ENCODE measurements at regions of chr19 and their contacts with region 1.

Region 1: GRCh38 chr19:7381073-7381390 is 32.3 kb downstream of the ARHGEF18 start:
- DNase-seq: no peak
- ATAC-seq: no peak
- H3K4me3 ChIP-seq: no peak overlapping the region
- H3K27ac ChIP-seq: peak overlapping the region in 1 of 12 donors; percentile 4
- H3K4me1 ChIP-seq: peaks cover 0 to 10% (median 0%) of the 10 kb centered on the region in 12 donors
- H3K27me3 ChIP-seq: no peaks in the 10 kb centered on the region
- CTCF ChIP-seq: no peak
- POLR2A ChIP-seq: no peak

Region 2: GRCh38 chr19:7098701-7099596 is 282.1 kb before region 1 on chr19:
- intact Hi-C with region 1: loop called in 1 of 10 experiments (anchors 2 kb)
- DNase-seq: peak; percentile 92 to 96 (median 94)
- ATAC-seq: peak; percentile 94 to 97 (median 96)
- H3K4me3 ChIP-seq: peak overlapping the region; percentile 30 to 91 (median 63)
- H3K27ac ChIP-seq: peak overlapping the region; percentile 91 to 98 (median 92)
- H3K4me1 ChIP-seq: peaks cover 0 to 12% (median 4%) of the 10 kb centered on the region in 12 donors
- H3K27me3 ChIP-seq: no peaks in the 10 kb centered on the region
- CTCF ChIP-seq: no peak
- POLR2A ChIP-seq: peak in 1 of 2 donors; percentile 57

Measured in heart left ventricle (tissue), 16 donors.